GM13977 (cell line): ENCODE measurements at regions of chr12 and their contacts with region 1.

Region 1: DNA sequence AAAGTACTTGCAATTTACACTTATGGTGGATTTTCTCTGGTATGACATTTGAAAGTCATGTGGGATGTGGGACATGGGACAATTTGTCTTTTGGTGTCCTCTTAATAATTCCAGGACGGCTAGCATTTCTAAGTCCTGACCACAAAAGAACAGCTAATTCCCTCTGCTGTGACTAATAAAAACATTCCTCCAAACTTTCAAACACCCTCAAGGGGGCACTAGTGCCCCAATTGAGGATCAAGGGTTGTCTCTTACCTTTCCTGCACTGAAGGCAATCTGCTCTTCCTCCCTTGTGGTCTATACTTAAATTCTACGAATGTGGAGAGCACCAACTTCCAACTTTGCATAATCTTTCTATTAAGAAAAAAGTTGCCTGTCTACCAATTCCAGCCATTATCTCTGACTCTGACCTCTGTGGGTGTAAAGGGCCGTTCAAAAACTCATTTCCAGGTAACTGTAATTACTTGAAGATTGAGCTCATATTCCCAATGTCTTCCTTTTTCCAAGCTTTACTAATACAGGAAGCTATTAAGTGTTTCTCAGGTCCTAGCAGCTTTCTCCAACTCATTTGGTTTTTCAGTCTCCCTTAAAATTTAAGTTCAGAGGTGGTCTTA is 210.2 kb downstream of the PTPRO start:
- DNase-seq: peak; percentile 39
- CTCF ChIP-seq: peak; percentile 72

Region 2: DNA sequence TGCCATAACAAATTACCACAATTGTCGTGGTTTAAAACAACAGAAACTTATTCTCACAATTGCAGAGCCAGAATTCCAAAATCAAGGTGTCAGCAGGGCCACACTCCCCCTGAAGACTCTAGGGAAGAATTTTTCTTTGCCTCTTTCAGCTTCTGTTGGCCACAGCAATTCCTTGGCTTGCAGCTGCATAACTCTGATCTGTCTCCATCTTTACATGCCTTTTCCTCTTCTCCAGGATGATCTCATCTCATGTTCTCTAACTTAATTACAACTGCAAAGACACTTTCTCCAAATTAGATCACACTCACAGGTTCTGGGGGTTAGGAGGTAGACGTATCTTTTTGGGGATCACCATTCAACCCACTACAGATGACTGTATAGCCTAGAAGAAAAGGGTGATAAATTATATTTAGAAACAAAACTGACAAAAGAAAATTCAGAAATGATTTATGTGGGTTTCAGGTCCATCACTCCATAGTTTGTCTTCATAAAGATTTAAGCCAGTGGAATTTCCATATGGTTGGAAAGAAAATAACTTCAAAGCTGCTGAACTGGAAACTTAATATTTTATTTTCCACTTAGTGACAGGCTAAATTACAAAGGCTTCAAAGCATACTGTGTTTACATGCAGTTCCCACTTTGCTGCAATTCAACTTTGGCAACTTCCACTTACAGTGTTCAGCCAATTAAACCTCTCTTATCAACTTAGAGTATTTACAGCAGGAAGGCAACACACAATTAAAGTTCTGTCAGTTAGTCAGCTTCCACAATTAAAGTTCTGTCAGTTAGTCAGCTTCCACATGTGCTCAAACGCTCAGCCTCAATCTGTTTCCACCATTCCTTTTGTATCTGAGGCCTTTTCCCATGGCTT is 43.4 kb after region 1 on chr12:
- in situ Hi-C with region 1: loop called (anchors 5 kb)
- DNase-seq: no peak
- CTCF ChIP-seq: no peak